ENCODE measurements at regions of chr16 and their contacts with region 1.

Region 1: GRCh38 chr16:19067349-19068236 is at the start of gene COQ7:
- DNase-seq: peak; percentile 100
- ATAC-seq: peak; percentile 93
- H3K4me3 ChIP-seq: peak within 1 kb of the TSS; percentile 63 to 85
- H3K27ac ChIP-seq: peak within 1 kb of the TSS; percentile 98
- H3K4me1 ChIP-seq: peaks cover 0 to 12% of the 10 kb centered on the region in 2 experiments; a peak in 3 of 4 replicates
- H3K27me3 ChIP-seq: no peaks in the 10 kb centered on the region
- CTCF ChIP-seq: no peak
- POLR2A ChIP-seq: no peak
- RAD21 ChIP-seq: no peak
- total RNA-seq, gene COQ7: 26.6 TPM

Region 2: DNA sequence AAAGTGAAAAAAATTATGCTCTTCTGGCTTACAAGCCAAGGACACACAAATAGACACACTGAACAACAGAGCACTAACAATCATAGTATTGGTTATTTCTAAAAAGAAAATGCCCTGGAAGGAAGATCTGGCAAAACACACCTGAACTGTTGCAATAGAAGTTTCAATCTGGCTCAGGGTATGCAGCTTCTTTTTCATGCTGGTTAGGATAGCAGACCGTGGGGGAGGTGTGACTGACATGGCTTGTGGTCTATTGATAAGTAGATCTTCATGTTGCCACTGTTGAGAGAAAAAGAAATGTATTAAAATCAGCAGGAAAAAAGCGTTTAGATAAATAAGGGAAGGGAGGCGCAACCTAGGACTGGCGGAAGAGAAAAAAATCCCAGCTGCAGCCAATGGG is 239.7 kb before region 1 on chr16:
- CTCF ChIA-PET with region 1: no interaction called
- POLR2A ChIA-PET with region 1: no interaction called
- RAD21 ChIA-PET with region 1: no interaction called
- intact Hi-C with region 1: no loop called
- DNase-seq: no peak
- ATAC-seq: no peak
- H3K4me3 ChIP-seq: no peak overlapping the region
- H3K27ac ChIP-seq: no peak overlapping the region
- H3K4me1 ChIP-seq: no peaks in the 10 kb centered on the region
- H3K27me3 ChIP-seq: no peaks in the 10 kb centered on the region
- CTCF ChIP-seq: no peak
- POLR2A ChIP-seq: no peak
- RAD21 ChIP-seq: no peak

Region 3: GRCh38 chr16:18999045-18999393 is 68.6 kb before region 1 on chr16:
- CTCF ChIA-PET with region 1: no interaction called
- POLR2A ChIA-PET with region 1: no interaction called
- RAD21 ChIA-PET with region 1: no interaction called
- intact Hi-C with region 1: loop called (anchors 5 kb)
- DNase-seq: no peak
- ATAC-seq: no peak; the same call in 1 of the 2 replicates
- H3K4me3 ChIP-seq: 0 out of 4 replicates have a peak overlapping the region, but pooled peaks of 1 of the 2 experiments have one; percentile 10
- H3K27ac ChIP-seq: peak overlapping the region; percentile 76
- H3K4me1 ChIP-seq: peaks cover 19 to 40% of the 10 kb centered on the region in 2 experiments
- H3K27me3 ChIP-seq: no peaks in the 10 kb centered on the region
- CTCF ChIP-seq: no peak
- POLR2A ChIP-seq: no peak
- RAD21 ChIP-seq: no peak

Region 4: GRCh38 chr16:19033761-19034160 is 33.8 kb before region 1 on chr16:
- CTCF ChIA-PET with region 1: no interaction called
- POLR2A ChIA-PET with region 1: no interaction called
- RAD21 ChIA-PET with region 1: no interaction called
- intact Hi-C with region 1: no loop called
- DNase-seq: no peak
- ATAC-seq: no peak
- H3K4me3 ChIP-seq: no peak overlapping the region
- H3K27ac ChIP-seq: no peak overlapping the region
- H3K4me1 ChIP-seq: no peaks in the 10 kb centered on the region
- H3K27me3 ChIP-seq: no peaks in the 10 kb centered on the region
- CTCF ChIP-seq: no peak
- POLR2A ChIP-seq: no peak
- RAD21 ChIP-seq: no peak

Region 5: GRCh38 chr16:19044769-19045168 is 22.8 kb before region 1 on chr16:
- CTCF ChIA-PET with region 1: no interaction called
- POLR2A ChIA-PET with region 1: no interaction called
- RAD21 ChIA-PET with region 1: no interaction called
- intact Hi-C with region 1: no loop called
- DNase-seq: no peak
- ATAC-seq: no peak
- H3K4me3 ChIP-seq: no peak overlapping the region
- H3K27ac ChIP-seq: no peak overlapping the region
- H3K4me1 ChIP-seq: no peaks in the 10 kb centered on the region
- H3K27me3 ChIP-seq: no peaks in the 10 kb centered on the region
- CTCF ChIP-seq: no peak
- POLR2A ChIP-seq: no peak
- RAD21 ChIP-seq: no peak

Measured in HCT116 (cell line).